ENCODE measurements at regions of chr11 and their contacts with region 1.

Region 1: DNA sequence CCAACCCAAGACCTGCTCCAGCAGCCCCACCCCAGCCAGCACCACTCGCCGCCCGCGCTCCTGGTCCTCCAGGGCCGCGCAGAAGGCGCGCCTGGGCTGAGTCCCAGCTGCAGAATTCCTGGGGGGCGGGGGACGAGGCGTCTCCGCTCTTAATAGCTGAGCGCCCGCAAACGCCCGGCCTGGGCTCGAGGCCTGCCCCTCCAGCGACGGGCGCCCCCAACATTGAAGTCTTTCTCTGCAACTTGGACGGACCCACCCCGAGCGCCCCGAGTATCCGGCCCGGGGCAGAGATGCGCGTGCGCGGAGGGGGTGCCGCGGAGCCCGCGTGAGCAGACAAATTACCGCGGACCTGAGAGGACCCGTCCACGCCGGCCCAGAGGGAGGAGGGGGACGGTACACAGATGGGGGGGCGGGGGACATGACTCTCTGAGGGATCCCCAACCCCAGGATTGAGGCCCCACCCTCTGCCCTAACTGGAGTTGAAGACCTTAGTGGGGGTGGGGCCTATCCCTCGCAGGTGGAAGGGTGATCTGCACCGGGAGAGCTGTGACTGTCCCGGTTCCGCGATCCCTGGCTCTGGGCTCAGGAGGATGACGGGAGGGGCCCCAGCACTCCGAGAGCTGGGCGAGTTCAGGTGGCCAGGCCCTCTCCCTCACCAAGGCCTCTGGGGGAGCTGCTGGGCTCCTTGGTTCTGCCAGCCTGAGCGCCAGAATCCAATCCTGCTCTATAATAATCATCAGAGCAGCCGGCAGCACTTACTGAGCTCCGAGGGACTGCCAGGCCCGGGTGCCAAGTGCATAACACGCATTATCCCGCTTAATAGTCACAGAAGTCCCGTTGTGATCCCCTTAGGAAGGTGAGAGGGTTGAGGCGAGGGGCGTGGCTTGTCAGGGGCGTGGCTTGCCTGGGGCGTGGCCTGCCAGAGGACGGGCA is 6.9 kb upstream of the SYT7 start:
- DNase-seq: peak; percentile 51 to 79
- H3K4me3 ChIP-seq: peak overlapping the region; percentile 55
- H3K27ac ChIP-seq: no peak overlapping the region
- H3K4me1 ChIP-seq: peaks cover 20% of the 10 kb centered on the region
- H3K27me3 ChIP-seq: peaks cover 34% of the 10 kb centered on the region; the same call in 1 of the 2 replicates
- CTCF ChIP-seq: peak; percentile 45; the same call in 1 of the 2 replicates

Region 2: DNA sequence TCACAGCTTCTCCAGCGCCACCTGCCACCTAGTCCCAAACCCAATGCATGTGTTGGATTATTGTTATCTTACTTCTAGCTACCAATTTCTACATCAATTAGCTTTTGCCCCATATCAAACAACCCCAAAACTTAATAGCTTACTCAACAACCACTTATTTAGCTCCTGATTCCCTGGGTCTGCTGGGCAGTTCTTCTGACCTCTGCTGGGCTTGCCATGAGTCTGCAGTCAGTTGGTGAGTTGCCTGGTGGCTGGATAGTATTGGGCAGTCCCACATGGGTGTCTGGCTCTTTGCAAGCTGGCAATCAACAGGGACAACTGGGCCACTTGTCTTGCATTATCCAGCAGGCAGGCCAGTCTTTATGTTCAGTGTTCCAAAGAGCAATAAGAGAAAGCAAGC is 844.7 kb before region 1 on chr11:
- CTCF ChIA-PET with region 1: no interaction called
- POLR2A ChIA-PET with region 1: no interaction called
- intact Hi-C with region 1: no loop called
- DNase-seq: peak in 1 of 2 experiments; percentile 33
- H3K4me3 ChIP-seq: no peak overlapping the region
- H3K27ac ChIP-seq: no peak overlapping the region
- H3K4me1 ChIP-seq: no peaks in the 10 kb centered on the region
- H3K27me3 ChIP-seq: peaks cover 43% of the 10 kb centered on the region
- CTCF ChIP-seq: no peak

Region 3: GRCh38 chr11:62487738-62488551 is 900.2 kb after region 1 on chr11:
- CTCF ChIA-PET with region 1: no interaction called
- POLR2A ChIA-PET with region 1: interaction called, 23 read pairs
- intact Hi-C with region 1: no loop called
- DNase-seq: no peak
- H3K4me3 ChIP-seq: no peak overlapping the region
- H3K27ac ChIP-seq: no peak overlapping the region
- H3K4me1 ChIP-seq: no peaks in the 10 kb centered on the region
- H3K27me3 ChIP-seq: no peaks in the 10 kb centered on the region
- CTCF ChIP-seq: no peak